GM23248 (cell line): ENCODE measurements at regions of chr2 and their contacts with region 1.

Region 1: DNA sequence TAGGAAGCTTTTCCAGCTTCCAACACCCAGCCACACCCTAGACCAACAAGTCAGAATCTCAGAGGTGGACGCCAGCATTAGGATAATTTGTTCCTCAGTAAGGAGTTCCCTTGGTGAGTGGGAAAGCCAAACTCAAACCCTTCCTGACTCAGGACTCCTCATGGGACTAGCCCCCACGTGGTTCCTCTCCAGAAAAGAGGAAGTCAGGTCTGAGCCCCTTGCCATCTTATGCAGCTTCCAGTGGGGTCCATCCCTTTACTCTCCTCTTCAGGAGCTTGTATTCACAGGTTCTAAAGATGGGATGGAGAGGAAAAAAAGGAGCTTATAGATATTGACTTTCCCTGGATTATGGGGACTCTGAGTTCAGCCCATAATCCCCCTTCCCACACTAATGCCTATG is 14.8 kb upstream of the NOTO start:
- DNase-seq: no peak
- H3K4me3 ChIP-seq: no peak overlapping the region
- H3K27ac ChIP-seq: no peak overlapping the region
- H3K4me1 ChIP-seq: no peaks in the 10 kb centered on the region
- H3K27me3 ChIP-seq: peaks cover 13% of the 10 kb centered on the region

Region 2: DNA sequence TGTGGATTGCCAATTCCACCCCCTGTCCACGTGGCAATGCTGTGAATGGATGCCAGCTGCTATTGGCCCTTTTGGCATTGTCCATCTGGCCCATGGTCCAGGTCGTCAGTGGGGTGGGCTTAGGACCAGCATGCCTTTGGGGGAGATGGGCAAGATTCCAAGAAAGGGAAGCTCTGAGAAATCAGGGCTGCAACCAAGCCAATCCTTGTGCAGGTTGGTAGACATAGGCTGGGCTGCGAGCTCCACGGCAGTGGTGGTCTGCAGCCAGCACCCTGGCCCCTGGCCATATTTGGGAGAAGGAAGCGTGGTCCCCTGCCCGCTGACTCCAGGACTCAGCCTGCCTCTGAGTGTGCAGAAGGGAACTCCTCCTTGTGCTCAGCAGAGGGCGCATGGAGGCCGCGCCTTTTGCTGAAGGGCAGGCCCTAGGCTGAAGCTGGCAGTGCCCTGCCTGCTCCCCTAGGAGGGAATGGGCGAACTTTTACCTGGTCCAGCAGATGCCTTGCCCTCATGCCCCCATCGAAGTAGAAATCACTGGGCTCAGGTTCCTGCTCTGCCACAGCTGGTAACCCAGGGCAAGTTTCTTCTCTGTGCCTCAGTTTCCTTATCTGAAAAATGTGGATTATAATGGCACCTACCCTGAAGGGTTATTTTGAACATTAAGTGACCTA is 294.9 kb before region 1 on chr2:
- in situ Hi-C with region 1: loop called (anchors 10 kb)
- DNase-seq: peak; percentile 91
- H3K4me3 ChIP-seq: no peak overlapping the region
- H3K27ac ChIP-seq: no peak overlapping the region
- H3K4me1 ChIP-seq: 0 out of 2 replicates have a peak, but pooled peaks cover 6% of the 10 kb centered on the region
- H3K27me3 ChIP-seq: 0 out of 2 replicates have a peak, but pooled peaks cover 6% of the 10 kb centered on the region

Region 3: GRCh38 chr2:73651586-73652230 is 464.2 kb after region 1 on chr2:
- in situ Hi-C with region 1: no loop called
- DNase-seq: no peak
- H3K4me3 ChIP-seq: no peak overlapping the region
- H3K27ac ChIP-seq: no peak overlapping the region
- H3K4me1 ChIP-seq: no peaks in the 10 kb centered on the region
- H3K27me3 ChIP-seq: 0 out of 2 replicates have a peak, but pooled peaks cover 4% of the 10 kb centered on the region